ENCODE measurements at regions of chr19 and their contacts with region 1.

Region 1: DNA sequence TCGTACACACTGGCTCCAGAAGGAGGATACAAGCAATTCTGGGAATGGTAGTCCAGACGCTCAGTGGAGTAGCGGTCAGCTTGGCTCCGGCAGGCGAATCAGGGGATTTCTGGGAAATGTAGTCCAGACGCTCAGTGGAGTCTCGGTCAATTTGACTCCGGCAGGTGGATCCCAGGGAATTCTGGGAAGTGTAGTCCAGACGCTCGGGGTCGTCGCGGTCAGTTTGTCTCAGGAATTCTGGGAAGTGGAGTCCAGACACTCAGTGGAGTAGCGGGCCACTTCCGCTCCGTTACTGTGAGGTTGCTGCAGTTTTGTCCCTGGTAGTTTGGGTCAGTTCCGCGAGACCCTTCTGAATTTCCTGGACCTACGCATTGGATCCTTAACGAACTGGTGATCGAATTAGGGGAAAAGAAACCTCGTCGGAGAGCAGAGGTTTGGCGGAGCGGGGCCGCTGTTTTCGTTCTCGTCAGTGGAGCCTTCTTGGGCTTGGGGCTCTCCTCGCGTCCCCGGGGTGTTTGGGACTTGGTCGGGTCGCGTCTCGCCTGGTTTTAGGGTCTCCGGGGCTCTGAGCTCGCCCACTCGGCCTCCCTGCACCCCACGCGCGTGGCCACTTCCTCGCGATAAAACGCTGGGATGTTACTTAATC is at the start of gene ZNF225:
- DNase-seq: peak; percentile 99
- H3K4me3 Mint-ChIP-seq: peak within 1 kb of the TSS; percentile 86
- H3K27ac Mint-ChIP-seq: peak within 1 kb of the TSS; percentile 57
- H3K4me1 Mint-ChIP-seq: peaks cover 6% of the 10 kb centered on the region
- H3K27me3 Mint-ChIP-seq: no peaks in the 10 kb centered on the region
- CTCF ChIP-seq: no peak
- total RNA-seq, gene ZNF225: 3.6 and 5.7 TPM in 2 replicates

Region 2: GRCh38 chr19:44141191-44142058 is 28.2 kb after region 1 on chr19 and contains the start of gene ZNF234:
- CTCF ChIA-PET with region 1: no interaction called
- POLR2A ChIA-PET with region 1: interaction called, 14 read pairs
- intact Hi-C with region 1: no loop called
- DNase-seq: peak; percentile 83
- H3K4me3 Mint-ChIP-seq: peak within 1 kb of the TSS; percentile 78
- H3K27ac Mint-ChIP-seq: peak within 1 kb of the TSS; percentile 83
- H3K4me1 Mint-ChIP-seq: peaks cover 6% of the 10 kb centered on the region
- H3K27me3 Mint-ChIP-seq: no peaks in the 10 kb centered on the region
- CTCF ChIP-seq: no peak
- total RNA-seq, gene ZNF234: 9.5 and 9.6 TPM in 2 replicates

Region 3: DNA sequence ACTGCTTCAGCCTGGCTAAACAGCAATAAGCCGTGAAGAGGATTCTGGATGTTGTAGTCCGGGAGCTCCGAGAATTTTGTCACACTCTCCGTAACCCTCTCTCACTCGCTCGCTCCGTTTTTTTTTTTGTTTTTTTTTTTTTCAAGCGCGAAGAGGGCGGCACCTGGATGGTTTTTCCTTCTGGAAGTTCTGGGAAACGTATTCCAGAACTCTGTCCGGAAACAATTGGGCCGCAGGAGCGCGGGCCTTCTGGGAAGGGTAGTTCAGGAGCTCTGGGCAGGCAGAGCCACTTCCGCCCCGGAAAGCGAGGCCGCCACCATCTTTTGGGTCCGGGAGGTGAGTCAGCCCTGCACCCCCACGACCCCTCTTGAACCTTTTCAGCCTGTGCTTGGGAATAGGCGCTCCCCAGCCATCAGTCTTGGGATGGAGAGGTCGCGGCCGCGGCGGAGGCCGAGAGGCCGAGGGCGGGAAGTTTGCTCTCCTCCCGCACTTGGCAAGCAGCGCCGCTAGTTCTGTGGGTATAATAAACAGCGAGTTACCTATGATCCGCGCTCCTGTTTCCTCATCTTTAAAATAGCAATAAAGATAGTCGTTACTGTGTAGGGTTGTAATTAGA is 99.1 kb after region 1 on chr19 and contains the start of gene ZNF227:
- CTCF ChIA-PET with region 1: no interaction called
- POLR2A ChIA-PET with region 1: interaction called, 7 read pairs
- intact Hi-C with region 1: loop called (anchors 5 kb)
- DNase-seq: peak; percentile 96
- H3K4me3 Mint-ChIP-seq: peak within 1 kb of the TSS; percentile 94
- H3K27ac Mint-ChIP-seq: peak within 1 kb of the TSS; percentile 92
- H3K4me1 Mint-ChIP-seq: peaks cover 9% of the 10 kb centered on the region
- H3K27me3 Mint-ChIP-seq: no peaks in the 10 kb centered on the region
- CTCF ChIP-seq: no peak
- total RNA-seq, gene ZNF227: 22.6 and 29.0 TPM in 2 replicates